Activated B cell treated with CpG ODN at 0.5 μM for 24 hours (primary cell): ENCODE measurements at regions of chr9 and their contacts with region 1.

Region 1: GRCh38 chr9:37422289-37423104 is at the start of gene GRHPR:
- DNase-seq: peak; percentile 90
- ATAC-seq: peak; percentile 98
- H3K4me3 Mint-ChIP-seq: peak within 1 kb of the TSS; percentile 96
- H3K27ac Mint-ChIP-seq: peak within 1 kb of the TSS; percentile 93
- H3K4me1 Mint-ChIP-seq: peaks cover 40% of the 10 kb centered on the region
- H3K27me3 Mint-ChIP-seq: no peaks in the 10 kb centered on the region
- CTCF ChIP-seq: no peak
- total RNA-seq, gene GRHPR: 315 TPM in 2 replicates

Region 2: DNA sequence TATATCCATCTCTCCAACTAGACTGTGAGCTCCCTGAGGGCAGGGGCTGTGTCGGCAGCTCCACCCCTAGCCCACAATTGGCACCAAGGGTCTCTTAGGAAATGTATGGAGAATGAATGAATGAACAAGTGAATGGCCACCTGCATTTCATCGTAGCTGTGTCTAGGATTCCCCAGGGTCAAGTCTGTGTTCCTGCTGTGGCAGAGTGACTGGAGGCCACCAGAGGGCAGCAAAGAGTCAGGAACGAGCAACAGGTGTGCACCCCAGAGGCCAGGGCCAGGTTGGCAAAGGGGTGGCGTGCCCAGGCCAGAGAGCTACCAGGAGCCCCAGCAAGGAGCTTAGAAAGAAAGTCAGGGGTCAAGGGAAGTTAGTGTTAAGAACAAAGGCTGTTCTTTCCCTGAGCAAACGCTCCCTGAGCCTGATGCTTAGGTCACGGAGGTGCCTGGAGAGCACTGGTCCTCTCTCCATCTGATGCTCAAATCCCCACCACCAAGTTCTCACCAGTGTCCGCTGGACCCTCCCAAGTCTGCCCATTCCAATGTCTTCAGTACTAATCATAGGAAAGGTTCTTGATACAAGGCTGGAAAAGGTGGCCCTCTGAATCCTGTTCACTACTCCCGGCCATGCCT is 549.1 kb before region 1 on chr9:
- CTCF ChIA-PET with region 1: no interaction called
- POLR2A ChIA-PET with region 1: no interaction called
- intact Hi-C with region 1: loop called (anchors 5 kb)
- DNase-seq: peak; percentile 52
- ATAC-seq: peak; percentile 77
- H3K4me3 Mint-ChIP-seq: no peak overlapping the region
- H3K27ac Mint-ChIP-seq: peak overlapping the region; percentile 87
- H3K4me1 Mint-ChIP-seq: peaks cover 63% of the 10 kb centered on the region
- H3K27me3 Mint-ChIP-seq: no peaks in the 10 kb centered on the region
- CTCF ChIP-seq: no peak

Region 3: DNA sequence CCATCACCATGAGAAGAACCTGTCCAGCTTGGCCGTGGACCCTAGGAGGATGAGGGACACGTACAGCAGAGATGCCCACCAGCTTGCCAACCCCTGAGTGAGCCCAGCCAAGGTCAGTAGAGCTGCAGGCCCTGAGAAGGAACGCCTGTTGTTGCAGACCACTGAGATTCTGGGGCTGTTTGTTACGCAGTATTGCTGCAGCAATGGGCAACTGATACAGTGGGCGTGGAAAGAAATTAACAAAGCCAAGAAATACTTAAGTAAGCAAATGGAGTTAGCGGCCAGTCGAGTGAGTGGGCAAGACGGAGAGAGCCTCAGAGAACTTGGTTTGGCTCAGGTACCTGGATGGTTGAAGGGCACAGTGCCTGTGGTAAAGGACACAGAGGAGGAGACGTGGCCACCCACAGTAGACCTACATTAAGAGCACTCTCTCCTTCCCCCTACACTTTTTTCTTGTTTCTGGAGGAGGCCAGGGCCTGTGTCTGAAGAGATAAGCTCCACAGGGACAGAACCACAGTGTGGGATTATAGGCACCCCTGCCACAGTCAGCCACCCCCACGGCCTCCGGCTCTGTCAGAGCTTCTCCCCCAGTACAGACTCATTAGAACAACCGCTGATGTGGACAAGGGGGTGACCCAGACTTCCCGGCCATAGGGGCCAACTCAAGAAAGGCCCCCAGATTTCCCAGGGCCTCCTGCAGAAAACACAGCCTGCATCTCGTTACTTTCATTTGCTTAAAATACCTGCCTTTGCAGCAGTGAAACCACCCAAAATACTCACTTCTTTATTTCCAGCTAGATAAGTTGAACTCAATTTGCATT is 40.1 kb before region 1 on chr9:
- CTCF ChIA-PET with region 1: no interaction called
- POLR2A ChIA-PET with region 1: interaction called, 10 read pairs
- intact Hi-C with region 1: no loop called
- DNase-seq: no peak
- ATAC-seq: peak; percentile 23
- H3K4me3 Mint-ChIP-seq: peak overlapping the region; percentile 53
- H3K27ac Mint-ChIP-seq: peak overlapping the region; percentile 97
- H3K4me1 Mint-ChIP-seq: peaks cover 94% of the 10 kb centered on the region
- H3K27me3 Mint-ChIP-seq: no peaks in the 10 kb centered on the region
- CTCF ChIP-seq: no peak

Region 4: DNA sequence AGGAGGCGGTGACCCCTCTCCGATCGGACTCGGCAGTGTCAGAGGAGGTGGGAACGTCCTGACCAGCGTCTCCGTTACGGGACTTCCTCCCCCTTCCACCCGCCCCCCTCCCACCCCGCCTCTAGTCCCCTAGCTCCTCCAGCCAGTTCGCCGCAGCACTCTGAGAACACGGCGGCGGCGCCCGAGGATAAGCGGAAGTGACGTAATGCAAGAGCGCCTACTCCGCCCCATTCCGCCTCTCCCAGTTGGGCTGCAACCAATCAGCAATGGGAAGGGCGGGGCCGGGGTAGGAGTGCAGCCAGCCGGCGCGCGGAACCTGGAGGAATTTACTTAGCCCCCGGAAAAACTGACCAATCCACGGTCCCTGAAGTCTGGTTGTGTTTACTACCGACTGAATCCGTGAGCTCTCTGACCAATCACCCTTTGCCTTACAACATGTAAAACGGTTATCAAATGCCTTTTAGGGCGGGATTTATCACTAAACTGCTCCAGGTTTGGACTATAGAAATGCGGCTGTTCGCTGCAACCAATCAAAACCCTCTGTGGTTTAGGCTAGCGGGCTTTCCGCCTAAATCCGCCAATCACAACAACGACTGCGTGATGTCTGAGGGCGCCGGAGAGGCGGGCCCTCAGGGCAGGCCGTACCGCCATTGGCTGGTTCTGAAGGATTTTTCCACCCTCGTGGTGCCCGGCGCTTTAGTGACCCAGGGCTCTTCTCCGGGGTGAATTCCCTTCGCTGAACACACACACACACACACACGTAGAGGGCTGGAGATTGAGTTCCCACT is 42.9 kb after region 1 on chr9 and contains the start of gene ZBTB5:
- CTCF ChIA-PET with region 1: no interaction called
- POLR2A ChIA-PET with region 1: interaction called, 23 read pairs
- intact Hi-C with region 1: no loop called
- DNase-seq: peak; percentile 93
- ATAC-seq: peak; percentile 76
- H3K4me3 Mint-ChIP-seq: peak within 1 kb of the TSS; percentile 98
- H3K27ac Mint-ChIP-seq: peak within 1 kb of the TSS; percentile 98
- H3K4me1 Mint-ChIP-seq: peaks cover 36% of the 10 kb centered on the region
- H3K27me3 Mint-ChIP-seq: no peaks in the 10 kb centered on the region
- CTCF ChIP-seq: no peak
- total RNA-seq, gene ZBTB5: 26.5 and 28.1 TPM in 2 replicates